ENCODE measurements at regions of chr21 and their contacts with region 1.

Region 1: DNA sequence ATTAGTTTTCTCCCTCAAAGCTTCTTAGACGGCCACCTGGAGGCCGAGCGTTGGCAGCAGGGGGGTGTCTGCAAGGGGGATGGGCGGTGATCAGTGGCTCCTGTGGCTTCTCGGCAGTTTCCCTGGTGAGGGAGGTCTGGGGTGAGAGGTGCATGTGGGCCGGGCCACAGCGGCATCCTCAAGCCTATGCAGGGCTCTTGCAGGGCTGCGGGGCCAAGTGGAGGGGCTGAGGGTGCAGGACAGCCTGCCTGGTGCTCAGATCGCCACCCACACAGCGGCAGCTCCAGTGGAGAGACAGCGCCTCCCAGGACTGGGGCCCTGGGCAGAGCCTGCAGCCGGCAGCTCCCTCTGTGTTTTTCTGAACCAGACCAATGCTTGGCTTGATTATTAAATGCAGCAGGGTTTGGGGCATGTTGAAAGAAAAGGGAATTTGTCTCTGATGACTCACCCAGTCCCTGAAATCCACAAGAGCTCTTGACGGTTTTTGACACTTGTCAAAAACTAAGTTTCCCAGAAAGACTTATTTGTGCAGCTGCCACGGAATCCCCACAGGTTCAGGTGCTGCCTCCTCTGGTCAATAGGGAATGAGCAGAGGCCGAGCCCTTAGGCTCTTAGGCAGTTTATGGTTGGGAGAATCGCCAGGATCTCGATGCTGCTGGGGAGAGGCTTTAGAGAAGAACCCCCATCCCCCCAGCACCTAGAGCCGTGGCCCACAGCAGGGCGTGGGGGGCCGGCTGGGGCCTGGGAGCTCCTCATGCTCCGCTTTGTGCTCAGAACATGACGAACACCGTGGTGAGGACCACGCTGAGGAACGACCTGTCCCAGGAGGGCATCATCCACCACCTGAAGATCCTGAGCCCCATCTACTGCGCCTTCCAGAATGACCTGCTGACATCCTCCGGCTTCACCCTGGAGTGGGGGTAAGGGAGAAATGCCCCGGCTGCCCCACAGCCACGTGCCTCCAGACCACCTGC is 54.7 kb downstream of the UMODL1 start:
- DNase-seq: peak; percentile 54
- H3K4me3 ChIP-seq: no peak overlapping the region
- H3K27ac ChIP-seq: no peak overlapping the region
- H3K4me1 ChIP-seq: no peaks in the 10 kb centered on the region
- H3K27me3 ChIP-seq: peaks cover 17% of the 10 kb centered on the region

Region 2: GRCh38 chr21:41601573-41602368 is 524.1 kb before region 1 on chr21:
- in situ Hi-C with region 1: loop called (anchors 10 kb)
- DNase-seq: peak; percentile 62
- H3K4me3 ChIP-seq: no peak overlapping the region
- H3K27ac ChIP-seq: no peak overlapping the region
- H3K4me1 ChIP-seq: no peaks in the 10 kb centered on the region
- H3K27me3 ChIP-seq: peaks cover 5% of the 10 kb centered on the region; the same call in 1 of the 2 replicates

Region 3: DNA sequence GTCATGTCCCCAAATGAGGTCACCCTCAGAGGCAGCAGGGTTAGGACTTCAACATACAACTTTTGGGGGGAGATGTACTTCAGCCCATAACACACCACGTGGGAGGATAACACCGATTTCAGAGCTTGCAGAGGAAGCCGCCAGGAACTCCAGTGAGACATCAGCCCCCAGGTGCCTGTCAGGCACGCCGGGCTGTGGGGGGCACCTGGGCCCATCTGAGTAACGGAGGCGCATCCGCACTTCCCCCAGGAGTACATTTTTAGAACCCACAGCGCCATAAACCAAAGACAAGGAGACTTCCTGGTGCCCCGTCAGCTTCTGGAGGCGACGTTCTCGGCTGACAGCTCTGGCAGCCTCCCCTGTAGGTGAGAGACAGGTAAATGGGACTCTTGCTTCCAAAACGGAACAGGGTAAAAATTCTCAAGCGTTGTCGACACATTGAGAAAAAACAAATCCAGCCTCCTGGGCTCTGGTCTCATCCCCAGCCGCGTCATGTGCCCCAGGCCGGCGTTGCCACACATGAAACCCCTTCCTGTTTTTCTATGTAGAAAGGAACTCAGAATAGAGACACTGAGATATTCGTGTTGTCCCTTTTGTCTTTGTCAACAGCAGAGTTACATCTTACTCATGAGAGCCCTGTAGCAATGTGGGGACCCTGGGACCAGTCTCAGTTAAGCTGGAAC is 620.9 kb after region 1 on chr21:
- in situ Hi-C with region 1: no loop called
- DNase-seq: no peak
- H3K4me3 ChIP-seq: no peak overlapping the region
- H3K27ac ChIP-seq: no peak overlapping the region
- H3K4me1 ChIP-seq: no peaks in the 10 kb centered on the region
- H3K27me3 ChIP-seq: peaks cover 32% of the 10 kb centered on the region

Measured in GM23248 (cell line).